ENCODE measurements at regions of chr7 and their contacts with region 1.

Region 1: DNA sequence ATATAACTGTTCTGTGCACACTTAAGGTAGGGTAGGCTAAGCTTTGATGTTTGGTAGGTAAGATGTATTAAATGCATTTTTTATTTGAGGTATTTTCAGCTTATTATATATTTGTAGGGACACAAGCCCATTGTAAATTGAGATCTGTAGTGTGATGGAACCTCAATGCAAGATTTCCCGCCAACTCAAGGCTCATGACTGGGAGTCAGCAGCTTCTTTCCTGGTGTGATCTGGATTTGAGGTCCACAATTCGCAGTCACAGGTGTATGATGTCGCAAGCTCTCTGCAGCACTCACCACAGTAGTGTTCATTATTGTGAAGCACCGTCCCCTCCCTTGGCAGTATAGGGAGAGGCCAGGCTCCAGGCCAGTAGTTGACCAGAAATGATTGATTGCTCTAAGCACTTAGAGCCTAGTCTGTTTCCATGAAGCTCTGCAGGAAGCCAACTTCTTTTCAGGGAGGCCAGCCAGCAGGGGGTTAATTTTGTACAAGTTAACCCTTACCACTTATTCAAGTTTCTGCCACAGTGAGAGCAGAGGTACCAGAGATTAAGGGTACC is 54.9 kb downstream of the SEM1 start:
- DNase-seq: no peak
- H3K4me3 ChIP-seq: no peak overlapping the region
- H3K27ac ChIP-seq: no peak overlapping the region
- H3K4me1 ChIP-seq: peaks cover 0 to 7% (median under 1%) of the 10 kb centered on the region in 4 experiments; a peak in 5 of 7 replicates
- H3K27me3 ChIP-seq: no peaks in the 10 kb centered on the region
- CTCF ChIP-seq: no peak
- EP300 ChIP-seq: no peak
- POLR2A ChIP-seq: no peak
- RAD21 ChIP-seq: no peak

Region 2: DNA sequence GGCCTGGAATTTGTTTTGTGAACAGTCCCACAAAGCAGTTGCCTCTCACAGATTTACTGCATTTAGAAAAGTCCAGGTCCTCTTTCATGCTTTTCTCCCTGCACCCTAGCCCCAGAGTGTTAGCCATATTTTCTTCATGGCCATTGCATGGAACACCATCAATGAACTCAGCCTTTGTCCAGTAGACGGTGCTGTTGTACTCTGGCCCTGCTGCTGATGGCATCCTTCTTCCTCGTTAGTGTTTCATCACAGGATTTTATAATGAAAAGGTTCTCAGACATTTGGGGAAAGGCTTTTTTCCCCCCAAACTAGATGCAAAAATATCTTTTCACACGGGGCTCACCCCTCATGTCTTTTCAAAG is 239.8 kb before region 1 on chr7:
- CTCF ChIA-PET with region 1: interaction called, 10 read pairs
- POLR2A ChIA-PET with region 1: no interaction called
- DNase-seq: peak in 1 of 2 experiments; percentile 60
- H3K4me3 ChIP-seq: no peak overlapping the region
- H3K27ac ChIP-seq: no peak overlapping the region
- H3K4me1 ChIP-seq: peaks cover 2 to 5% (median 3%) of the 10 kb centered on the region in 4 experiments; a peak in 5 of 7 replicates
- H3K27me3 ChIP-seq: no peaks in the 10 kb centered on the region; a peak in 1 of 7 replicates
- CTCF ChIP-seq: peak; percentile 55 to 92 (median 83)
- EP300 ChIP-seq: no peak
- POLR2A ChIP-seq: no peak
- RAD21 ChIP-seq: peak; percentile 96 to 97

Region 3: DNA sequence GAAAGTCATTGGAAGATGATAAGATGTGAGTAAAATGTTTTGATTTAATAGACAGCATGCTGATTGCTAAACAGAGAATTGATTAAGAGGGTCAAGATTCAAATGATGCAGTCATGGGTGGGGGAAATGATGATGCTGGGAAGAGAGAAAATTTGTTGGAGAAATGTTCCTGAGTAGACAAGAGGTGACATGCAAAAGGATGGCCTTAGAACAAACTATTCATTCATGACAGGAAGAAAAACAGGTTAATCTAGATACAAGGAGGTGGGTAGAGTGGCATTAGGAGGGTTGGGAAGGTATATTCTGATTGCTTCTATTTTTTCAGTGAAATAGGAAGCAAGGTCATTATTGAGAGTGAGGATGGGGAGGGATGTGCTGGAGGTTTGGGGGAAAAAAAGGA is 91.7 kb before region 1 on chr7:
- CTCF ChIA-PET with region 1: no interaction called
- POLR2A ChIA-PET with region 1: no interaction called
- DNase-seq: no peak
- H3K4me3 ChIP-seq: no peak overlapping the region
- H3K27ac ChIP-seq: no peak overlapping the region
- H3K4me1 ChIP-seq: no peaks in the 10 kb centered on the region
- H3K27me3 ChIP-seq: no peaks in the 10 kb centered on the region
- CTCF ChIP-seq: no peak
- EP300 ChIP-seq: no peak
- POLR2A ChIP-seq: no peak
- RAD21 ChIP-seq: no peak

Region 4: GRCh38 chr7:96624954-96625353 is 29.8 kb before region 1 on chr7:
- CTCF ChIA-PET with region 1: no interaction called
- POLR2A ChIA-PET with region 1: no interaction called
- DNase-seq: no peak
- H3K4me3 ChIP-seq: no peak overlapping the region
- H3K27ac ChIP-seq: no peak overlapping the region
- H3K4me1 ChIP-seq: peaks cover 0 to 5% (median 2%) of the 10 kb centered on the region in 4 experiments; a peak in 4 of 7 replicates
- H3K27me3 ChIP-seq: no peaks in the 10 kb centered on the region
- CTCF ChIP-seq: no peak
- EP300 ChIP-seq: no peak
- POLR2A ChIP-seq: no peak
- RAD21 ChIP-seq: no peak

Measured in H1 (cell line).